Activated CD4-positive, alpha-beta memory T cell treated with anti-CD3 and anti-CD28 coated beads for 36 hours (primary cell): ENCODE measurements at regions of chr1 and their contacts with region 1.

Region 1: DNA sequence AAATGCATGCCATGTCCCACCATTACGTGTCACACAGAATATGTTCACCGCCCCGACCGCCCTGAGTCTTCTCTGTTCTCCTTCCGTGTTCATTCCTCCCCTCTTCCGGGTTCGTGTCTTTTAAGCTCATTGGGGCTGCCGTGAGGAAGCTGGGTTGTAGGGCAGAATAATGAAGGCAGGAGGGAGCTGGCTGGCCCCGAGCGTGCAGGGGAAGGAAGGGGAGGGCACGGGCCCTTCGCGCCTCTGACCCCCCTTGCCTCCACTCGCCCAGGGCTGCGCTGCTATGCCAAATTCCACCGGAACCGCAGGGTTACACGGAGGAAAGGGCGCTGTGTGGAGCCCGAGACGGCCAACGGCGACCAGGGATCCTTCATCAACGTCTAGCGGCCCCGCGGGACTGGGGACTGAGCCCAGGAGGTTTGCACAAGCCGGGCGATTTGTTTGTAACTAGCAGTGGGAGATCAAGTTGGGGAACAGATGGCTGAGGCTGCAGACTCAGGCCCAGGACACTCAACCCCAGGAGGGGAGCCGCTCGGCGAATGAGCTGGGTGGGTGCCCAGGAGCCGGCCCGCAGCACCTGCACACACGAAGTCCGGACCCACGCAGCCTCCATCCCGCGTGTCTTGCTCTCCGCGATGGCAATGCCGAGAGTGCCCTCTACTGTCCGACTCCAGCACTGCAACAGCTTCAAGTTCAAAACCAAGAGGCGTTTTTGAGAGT is 16.5 kb upstream of the AGTRAP start:
- DNase-seq: peak; percentile 88
- H3K4me3 Mint-ChIP-seq: peak overlapping the region; percentile 73
- H3K27ac Mint-ChIP-seq: peak overlapping the region; percentile 68
- H3K4me1 Mint-ChIP-seq: peaks cover 12% of the 10 kb centered on the region
- H3K27me3 Mint-ChIP-seq: no peaks in the 10 kb centered on the region

Region 2: GRCh38 chr1:11654137-11654938 is 65.1 kb before region 1 on chr1 and contains the starts of genes FBXO2 and FBXO44:
- CTCF ChIA-PET with region 1: interaction called, 100 read pairs
- POLR2A ChIA-PET with region 1: interaction called, 12 read pairs
- intact Hi-C with region 1: loop called (anchors 1 kb)
- DNase-seq: peak; percentile 67
- H3K4me3 Mint-ChIP-seq: peak within 1 kb of the TSS; percentile 70
- H3K27ac Mint-ChIP-seq: no peak within 1 kb of the TSS
- H3K4me1 Mint-ChIP-seq: peaks cover 24% of the 10 kb centered on the region
- H3K27me3 Mint-ChIP-seq: no peaks in the 10 kb centered on the region
- total RNA-seq, gene FBXO2: 1.8 to 2.5 TPM
- total RNA-seq, gene FBXO44: 16.8 to 18.6 TPM

Region 3: DNA sequence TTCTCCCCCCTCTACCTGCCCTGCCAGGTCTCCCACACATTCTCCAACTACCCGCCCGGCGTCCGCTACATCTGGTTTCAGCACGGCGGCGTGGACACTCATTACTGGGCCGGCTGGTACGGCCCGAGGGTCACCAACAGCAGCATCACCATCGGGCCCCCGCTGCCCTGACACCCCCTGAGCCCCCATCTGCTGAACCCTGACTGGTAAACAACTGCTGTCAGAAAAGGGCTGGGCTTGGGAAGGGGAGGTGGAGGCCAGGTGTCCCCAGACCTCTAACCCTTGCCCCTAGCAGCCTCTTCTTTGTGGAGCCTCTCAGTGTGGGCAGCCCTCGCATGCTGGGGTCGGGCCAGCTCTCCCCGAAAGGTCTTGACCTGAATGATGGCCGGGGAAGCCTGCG is 58.4 kb before region 1 on chr1:
- CTCF ChIA-PET with region 1: interaction called, 71 read pairs
- POLR2A ChIA-PET with region 1: interaction called, 14 read pairs
- intact Hi-C with region 1: loop called (anchors 1 kb)
- DNase-seq: no peak
- H3K4me3 Mint-ChIP-seq: no peak overlapping the region
- H3K27ac Mint-ChIP-seq: no peak overlapping the region
- H3K4me1 Mint-ChIP-seq: no peaks in the 10 kb centered on the region
- H3K27me3 Mint-ChIP-seq: no peaks in the 10 kb centered on the region

Region 4: DNA sequence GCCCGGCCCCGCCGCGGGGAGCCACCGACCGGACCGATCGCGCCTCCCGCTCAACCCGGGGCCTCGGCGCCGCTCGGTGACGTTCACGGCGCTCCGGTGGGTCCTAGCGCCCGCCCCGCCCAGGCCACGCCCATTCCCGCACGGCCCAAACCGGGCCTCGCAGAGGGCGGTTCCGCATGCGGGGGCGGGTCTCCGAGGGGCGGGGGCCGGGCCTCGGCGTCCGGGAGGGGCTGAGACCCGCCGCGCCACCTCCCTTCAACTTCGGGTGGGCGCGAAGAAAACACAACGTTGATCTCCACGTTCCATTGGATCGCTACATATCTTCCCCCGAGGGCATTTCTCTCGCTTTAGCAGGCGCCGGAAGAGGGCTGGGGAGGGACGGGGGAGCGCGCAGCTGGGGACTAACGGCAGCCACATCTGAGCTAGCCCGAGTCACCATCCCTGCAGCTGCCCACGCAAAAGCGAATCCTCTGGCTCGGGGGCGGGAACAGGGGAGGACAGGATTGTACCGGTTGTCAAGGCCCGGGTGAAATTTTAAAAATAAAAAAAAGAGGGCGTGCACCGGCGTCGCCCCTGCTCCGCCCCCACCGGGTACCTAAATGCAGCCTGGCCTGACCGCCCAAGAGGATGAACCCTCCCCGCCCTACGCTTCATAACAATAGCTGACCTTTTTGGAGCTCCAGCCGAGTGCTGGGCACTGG is 38.3 kb before region 1 on chr1 and contains the start of gene MAD2L2:
- CTCF ChIA-PET with region 1: interaction called, 17 read pairs
- POLR2A ChIA-PET with region 1: interaction called, 3 read pairs
- intact Hi-C with region 1: loop called (anchors 1 kb)
- DNase-seq: peak; percentile 92
- H3K4me3 Mint-ChIP-seq: peak within 1 kb of the TSS; percentile 86
- H3K27ac Mint-ChIP-seq: peak within 1 kb of the TSS; percentile 92
- H3K4me1 Mint-ChIP-seq: peaks cover 11% of the 10 kb centered on the region
- H3K27me3 Mint-ChIP-seq: peaks cover 2% of the 10 kb centered on the region
- total RNA-seq, gene MAD2L2: 88.5 to 93.2 TPM

Region 5: DNA sequence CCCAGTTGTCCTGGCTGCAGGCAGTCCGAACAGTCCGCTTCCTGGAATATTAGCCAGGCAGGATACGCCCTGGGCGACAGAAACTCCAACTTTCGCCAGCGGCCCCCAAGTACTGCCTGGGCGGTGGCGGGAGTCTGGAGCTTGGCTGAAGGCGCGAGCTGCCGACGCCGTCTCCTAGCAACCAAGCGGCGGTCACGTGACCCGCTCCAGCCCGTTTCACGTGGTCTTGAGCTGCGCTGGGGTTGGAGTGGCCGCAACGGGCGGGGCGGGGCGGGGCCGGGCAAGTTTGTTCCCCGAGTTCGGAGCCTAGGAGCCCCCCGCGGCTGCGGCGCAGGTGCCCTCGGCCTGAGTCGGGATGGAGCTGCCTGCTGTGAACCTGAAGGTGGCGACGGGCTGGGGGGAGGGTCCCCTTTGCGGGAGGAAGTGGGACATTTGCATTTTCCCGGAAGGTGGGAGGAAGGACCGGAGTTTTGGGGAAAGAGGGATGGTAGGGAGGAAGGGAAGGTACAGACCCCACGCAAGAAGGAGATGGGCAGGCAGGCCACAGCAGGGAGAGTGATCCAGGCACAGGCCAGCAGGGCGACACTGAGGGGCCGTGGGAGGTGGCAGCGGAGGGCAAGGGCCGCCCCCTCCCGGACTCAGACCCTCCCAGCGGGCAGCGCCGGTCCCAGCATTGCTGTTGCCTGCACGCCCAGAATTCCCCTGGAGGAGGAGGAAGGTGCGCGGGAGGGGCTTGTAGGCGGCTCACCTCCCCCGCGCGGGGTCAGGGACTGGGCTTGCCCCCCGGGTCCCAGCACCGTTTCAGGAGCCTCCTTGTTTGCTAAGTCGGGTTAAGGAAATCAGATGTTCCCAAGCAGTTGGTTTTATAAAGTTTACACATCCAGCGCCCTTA is 16.6 kb after region 1 on chr1 and contains the start of gene AGTRAP:
- CTCF ChIA-PET with region 1: interaction called, 35 read pairs
- POLR2A ChIA-PET with region 1: interaction called, 3 read pairs
- intact Hi-C with region 1: no loop called
- DNase-seq: peak; percentile 93
- H3K4me3 Mint-ChIP-seq: peak within 1 kb of the TSS; percentile 96
- H3K27ac Mint-ChIP-seq: peak within 1 kb of the TSS; percentile 85
- H3K4me1 Mint-ChIP-seq: peaks cover 49% of the 10 kb centered on the region
- H3K27me3 Mint-ChIP-seq: no peaks in the 10 kb centered on the region
- total RNA-seq, gene AGTRAP: 16.5 to 18.0 TPM